ENCODE measurements at regions of chr5 and their contacts with region 1.

Region 1: GRCh38 chr5:159533197-159533596 is 202.9 kb upstream of the IL12B start:
- DNase-seq: peak in 1 of 2 experiments; percentile 22
- H3K4me3 ChIP-seq: no peak overlapping the region
- H3K4me3 Mint-ChIP-seq: no peak overlapping the region
- H3K27ac Mint-ChIP-seq: no peak overlapping the region
- H3K4me1 ChIP-seq: no peaks in the 10 kb centered on the region
- H3K4me1 Mint-ChIP-seq: no peaks in the 10 kb centered on the region
- H3K27me3 ChIP-seq: no peaks in the 10 kb centered on the region
- H3K27me3 Mint-ChIP-seq: no peaks in the 10 kb centered on the region
- CTCF ChIP-seq: no peak

Region 2: GRCh38 chr5:160075073-160075472 is 541.9 kb after region 1 on chr5:
- CTCF ChIA-PET with region 1: no interaction called
- POLR2A ChIA-PET with region 1: interaction called, 10 read pairs
- intact Hi-C with region 1: no loop called
- DNase-seq: no peak
- H3K4me3 ChIP-seq: no peak overlapping the region
- H3K4me3 Mint-ChIP-seq: no peak overlapping the region
- H3K27ac Mint-ChIP-seq: no peak overlapping the region
- H3K4me1 ChIP-seq: 0 out of 2 replicates have a peak, but pooled peaks cover 3% of the 10 kb centered on the region
- H3K4me1 Mint-ChIP-seq: peaks cover 12% of the 10 kb centered on the region
- H3K27me3 ChIP-seq: no peaks in the 10 kb centered on the region
- H3K27me3 Mint-ChIP-seq: no peaks in the 10 kb centered on the region
- CTCF ChIP-seq: no peak